ENCODE measurements at regions of chr6 and their contacts with region 1.

Region 1: GRCh38 chr6:13395272-13396237 is 67.2 kb upstream of the TBC1D7 start:
- DNase-seq: peak; percentile 73
- ATAC-seq: peak; percentile 59
- H3K4me3 ChIP-seq: peak overlapping the region in 1 of 5 experiments; percentile 2
- H3K4me3 Mint-ChIP-seq: peak overlapping the region; percentile 47
- H3K27ac ChIP-seq: peak overlapping the region; percentile 79 to 83
- H3K27ac Mint-ChIP-seq: peak overlapping the region; percentile 91
- H3K4me1 ChIP-seq: peaks cover 36 to 52% of the 10 kb centered on the region in 2 donors
- H3K4me1 Mint-ChIP-seq: peaks cover 52% of the 10 kb centered on the region
- H3K27me3 ChIP-seq: no peaks in the 10 kb centered on the region
- H3K27me3 Mint-ChIP-seq: no peaks in the 10 kb centered on the region
- CTCF ChIP-seq: no peak

Region 2: DNA sequence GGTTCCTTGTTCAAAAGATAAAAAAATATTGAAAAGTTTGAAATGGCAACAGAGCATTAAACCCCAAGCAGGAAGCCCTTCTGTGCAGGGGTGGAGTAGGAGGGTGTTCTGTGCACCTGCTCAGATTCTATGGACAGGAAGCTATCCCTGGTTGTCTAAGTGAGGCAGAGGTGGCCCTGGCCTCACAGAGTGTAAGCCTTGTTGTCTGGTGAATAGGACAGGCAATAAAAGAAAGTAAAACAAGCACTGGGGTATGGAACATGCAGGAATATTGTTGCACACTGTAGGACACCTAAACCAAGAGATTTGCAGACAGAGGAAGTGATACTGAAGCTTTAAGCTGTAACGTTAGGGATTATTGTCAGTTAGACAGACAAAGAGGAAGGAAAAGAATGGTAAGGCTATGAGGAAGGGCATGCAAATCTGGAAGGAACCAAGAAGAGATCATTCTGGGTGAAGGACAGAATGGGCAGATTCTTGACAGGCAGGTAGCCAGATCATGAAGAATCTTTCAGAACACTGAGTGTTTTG is 134.0 kb before region 1 on chr6:
- CTCF ChIA-PET with region 1: no interaction called
- POLR2A ChIA-PET with region 1: no interaction called
- intact Hi-C with region 1: loop called (anchors 5 kb)
- DNase-seq: peak; percentile 91
- ATAC-seq: peak; percentile 76
- H3K4me3 ChIP-seq: peak overlapping the region; percentile 25 to 55 (median 36)
- H3K4me3 Mint-ChIP-seq: peak overlapping the region; percentile 75
- H3K27ac ChIP-seq: peak overlapping the region; percentile 93
- H3K27ac Mint-ChIP-seq: peak overlapping the region; percentile 86
- H3K4me1 ChIP-seq: peaks cover 73 to 87% of the 10 kb centered on the region in 2 donors
- H3K4me1 Mint-ChIP-seq: peaks cover 89% of the 10 kb centered on the region
- H3K27me3 ChIP-seq: no peaks in the 10 kb centered on the region
- H3K27me3 Mint-ChIP-seq: no peaks in the 10 kb centered on the region
- CTCF ChIP-seq: no peak

Region 3: DNA sequence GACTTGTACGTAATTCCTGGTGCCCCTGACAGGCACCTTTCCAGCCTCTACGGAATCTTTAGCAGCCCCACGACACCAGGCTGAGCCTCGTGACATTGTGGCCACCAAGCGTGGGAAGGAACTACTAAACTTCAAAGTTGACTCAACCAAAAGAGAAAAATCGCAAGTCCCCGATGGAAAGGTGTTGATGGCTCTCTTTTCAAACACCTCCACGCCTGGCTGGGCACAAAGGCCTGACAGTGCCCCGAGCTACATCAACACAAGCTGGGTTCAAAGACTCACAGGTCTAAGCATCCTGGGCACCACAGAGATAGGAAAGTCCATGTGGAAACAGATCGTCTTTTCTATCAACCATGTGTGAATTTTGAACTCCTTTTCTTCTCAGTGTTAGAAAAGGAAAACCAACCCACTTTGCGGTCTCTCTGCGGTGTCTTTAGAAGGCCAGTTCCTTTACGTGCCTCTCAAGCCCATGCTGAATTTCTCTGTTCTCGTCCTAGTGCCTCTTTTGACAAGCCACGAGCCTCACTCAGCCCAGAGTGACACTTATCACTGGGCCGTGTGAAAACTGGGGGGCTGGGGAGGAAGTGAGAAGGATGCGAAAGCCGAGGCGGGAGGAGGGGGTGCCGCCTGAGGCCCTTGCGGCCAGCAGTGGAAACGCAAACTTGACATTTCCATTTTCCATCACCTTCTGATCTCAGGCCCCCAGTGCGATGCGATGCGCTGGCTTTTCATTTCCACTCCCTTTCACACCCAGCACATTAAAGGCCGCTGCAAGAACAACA is 32.4 kb after region 1 on chr6:
- CTCF ChIA-PET with region 1: interaction called, 5 read pairs
- POLR2A ChIA-PET with region 1: interaction called, 4 read pairs
- intact Hi-C with region 1: loop called (anchors 1 kb)
- DNase-seq: peak; percentile 91
- ATAC-seq: peak; percentile 85
- H3K4me3 ChIP-seq: peak overlapping the region in 4 of 5 experiments; percentile 7 to 46 (median 26)
- H3K4me3 Mint-ChIP-seq: peak overlapping the region; percentile 82
- H3K27ac ChIP-seq: peak overlapping the region; percentile 83 to 86
- H3K27ac Mint-ChIP-seq: peak overlapping the region; percentile 95
- H3K4me1 ChIP-seq: peaks cover 41 to 75% of the 10 kb centered on the region in 2 donors
- H3K4me1 Mint-ChIP-seq: peaks cover 67% of the 10 kb centered on the region
- H3K27me3 ChIP-seq: no peaks in the 10 kb centered on the region
- H3K27me3 Mint-ChIP-seq: no peaks in the 10 kb centered on the region
- CTCF ChIP-seq: peak; percentile 66

Region 4: DNA sequence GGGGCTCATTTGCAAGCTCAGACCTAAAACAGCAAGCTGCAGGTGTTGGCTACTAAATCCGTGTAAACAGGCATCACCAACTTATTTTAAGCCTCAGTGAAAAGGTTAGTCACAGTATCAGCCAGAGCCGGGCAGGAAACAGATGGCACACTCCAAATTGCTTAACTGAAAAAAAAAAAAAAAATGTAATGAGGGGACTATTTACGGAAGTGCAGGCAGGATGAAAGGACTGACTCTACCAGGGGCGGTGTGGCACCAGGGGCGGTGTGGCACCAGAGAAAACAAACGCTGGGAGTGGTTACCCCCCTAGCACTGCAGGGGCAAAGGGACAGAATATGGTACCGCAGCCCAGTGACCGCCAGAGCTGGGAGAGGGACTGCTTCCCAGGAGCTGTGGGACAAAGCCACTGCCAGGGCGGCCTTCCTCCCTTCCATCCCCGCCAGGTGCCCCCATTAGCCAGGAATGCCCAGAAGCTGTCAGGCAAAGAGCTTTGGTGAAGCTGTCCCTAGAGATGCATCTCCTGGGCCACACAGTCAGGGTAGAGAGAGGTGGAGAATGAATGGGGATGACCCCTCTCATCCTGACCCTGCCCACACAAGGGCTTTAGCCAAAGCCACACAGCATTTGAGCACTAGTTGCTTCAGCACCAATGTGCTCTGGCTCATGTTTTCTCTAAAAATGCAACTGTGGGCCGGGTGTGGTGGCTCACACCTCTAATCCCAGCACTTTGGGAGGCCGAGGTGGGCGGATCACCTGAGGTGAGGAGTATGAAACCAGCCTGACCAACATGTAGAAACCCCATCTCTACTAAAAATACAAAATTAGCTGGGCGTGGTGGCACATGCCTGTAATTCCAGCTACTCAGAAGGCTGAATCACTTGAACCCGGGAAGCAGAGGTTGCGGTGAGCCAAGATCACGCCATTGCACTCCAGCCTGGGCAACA is 131.4 kb after region 1 on chr6:
- CTCF ChIA-PET with region 1: no interaction called
- POLR2A ChIA-PET with region 1: interaction called, 6 read pairs
- intact Hi-C with region 1: loop called (anchors 1 kb)
- DNase-seq: peak; percentile 86
- ATAC-seq: peak; percentile 88
- H3K4me3 ChIP-seq: peak overlapping the region in 3 of 5 experiments; percentile 0 to 33 (median 11)
- H3K4me3 Mint-ChIP-seq: peak overlapping the region; percentile 40
- H3K27ac ChIP-seq: peak overlapping the region; percentile 76 to 89
- H3K27ac Mint-ChIP-seq: peak overlapping the region; percentile 88
- H3K4me1 ChIP-seq: peaks cover 38 to 41% of the 10 kb centered on the region in 2 donors
- H3K4me1 Mint-ChIP-seq: peaks cover 47% of the 10 kb centered on the region
- H3K27me3 ChIP-seq: no peaks in the 10 kb centered on the region
- H3K27me3 Mint-ChIP-seq: no peaks in the 10 kb centered on the region
- CTCF ChIP-seq: peak; percentile 33